Transverse colon (tissue), 4 donors: ENCODE measurements at regions of chr13 and their contacts with region 1.

Region 1: DNA sequence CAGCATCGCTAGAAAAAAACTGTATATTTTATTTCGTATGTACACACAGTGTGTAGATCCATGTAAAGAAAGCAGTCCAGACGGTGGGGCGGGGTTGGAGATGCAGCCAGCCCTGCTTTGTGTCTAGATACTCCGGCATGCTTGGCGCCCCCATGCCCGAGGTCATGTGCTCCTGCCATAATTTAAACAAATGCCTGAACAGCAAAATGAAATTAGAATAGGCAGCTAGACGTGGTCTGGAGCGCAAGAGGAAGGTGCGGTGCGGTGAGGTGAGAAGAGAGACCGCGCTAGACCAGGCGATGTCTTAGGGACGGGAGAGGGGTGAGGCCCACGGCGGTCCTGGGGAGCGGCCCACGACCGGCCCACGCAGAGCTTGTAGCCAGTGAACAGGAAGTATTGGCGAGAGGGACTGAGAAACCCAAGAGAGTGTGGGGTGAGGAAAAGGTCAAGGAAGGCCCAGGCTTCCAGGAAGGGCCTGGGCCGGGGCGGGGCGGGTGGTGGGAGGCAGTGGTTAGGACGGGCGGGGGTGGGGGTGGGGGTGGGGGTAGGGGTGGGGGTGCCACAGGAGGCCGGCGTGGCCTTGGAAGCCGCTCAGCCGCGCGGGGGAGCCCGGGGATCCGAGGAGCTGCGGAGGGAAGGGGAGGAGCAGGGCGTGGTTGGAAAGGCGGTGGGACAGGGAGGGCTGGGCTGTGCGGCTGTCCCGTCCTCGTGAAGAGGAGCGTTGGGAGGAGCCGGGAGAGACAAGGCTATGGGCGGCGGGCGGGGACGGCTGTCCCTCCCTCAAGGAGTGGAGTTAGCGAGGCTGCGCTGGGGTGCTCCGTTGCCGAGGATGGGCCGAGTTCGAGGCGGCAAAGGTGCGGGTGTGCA is 254.7 kb upstream of the SGCG start:
- DNase-seq: peak; percentile 67
- H3K4me3 ChIP-seq: peak overlapping the region; percentile 18 to 52 (median 38)
- H3K27ac ChIP-seq: peak overlapping the region; percentile 63 to 82 (median 71)
- H3K4me1 ChIP-seq: no peaks in the 10 kb centered on the region
- H3K27me3 ChIP-seq: no peaks in the 10 kb centered on the region
- CTCF ChIP-seq: no peak
- EP300 ChIP-seq: no peak
- POLR2A ChIP-seq: no peak

Region 2: GRCh38 chr13:24355103-24355502 is 1429.0 kb after region 1 on chr13:
- in situ Hi-C with region 1: loop called in 2 of 4 experiments (anchors 25 kb)
- intact Hi-C with region 1: no loop called
- DNase-seq: no peak
- H3K4me3 ChIP-seq: no peak overlapping the region
- H3K27ac ChIP-seq: no peak overlapping the region
- H3K4me1 ChIP-seq: peaks cover 0 to 11% (median 3%) of the 10 kb centered on the region in 4 donors
- H3K27me3 ChIP-seq: no peaks in the 10 kb centered on the region
- CTCF ChIP-seq: no peak
- EP300 ChIP-seq: no peak
- POLR2A ChIP-seq: no peak